ENCODE measurements at regions of chr1 and their contacts with region 1.

Region 1: GRCh38 chr1:159936273-159936904 is 9.0 kb downstream of the IGSF9 start:
- DNase-seq: peak; percentile 66 to 86 (median 77)
- H3K4me3 ChIP-seq: no peak overlapping the region
- H3K4me3 Mint-ChIP-seq: peak overlapping the region in 1 of 7 donors; percentile 54
- H3K27ac ChIP-seq: no peak overlapping the region
- H3K27ac Mint-ChIP-seq: peak overlapping the region in 2 of 8 donors; percentile 4 to 52
- H3K4me1 ChIP-seq: peaks cover 9% of the 10 kb centered on the region
- H3K4me1 Mint-ChIP-seq: peaks cover 5 to 8% (median 5%) of the 10 kb centered on the region in 3 donors
- H3K27me3 ChIP-seq: peaks cover 2% of the 10 kb centered on the region
- H3K27me3 Mint-ChIP-seq: peaks cover 9 to 21% of the 10 kb centered on the region in 2 donors

Region 2: GRCh38 chr1:159924981-159925712 is 11.2 kb before region 1 on chr1 and contains the start of gene TAGLN2:
- CTCF ChIA-PET with region 1: interaction called, 55 read pairs
- POLR2A ChIA-PET with region 1: no interaction called
- DNase-seq: peak; percentile 79 to 93 (median 87)
- H3K4me3 ChIP-seq: peak within 1 kb of the TSS; percentile 100
- H3K4me3 Mint-ChIP-seq: peak within 1 kb of the TSS; percentile 89 to 99 (median 96)
- H3K27ac ChIP-seq: peak within 1 kb of the TSS; percentile 100
- H3K27ac Mint-ChIP-seq: peak within 1 kb of the TSS; percentile 97 to 100 (median 100)
- H3K4me1 ChIP-seq: peaks cover 44% of the 10 kb centered on the region
- H3K4me1 Mint-ChIP-seq: peaks cover 50 to 61% (median 52%) of the 10 kb centered on the region in 3 donors
- H3K27me3 ChIP-seq: no peaks in the 10 kb centered on the region
- H3K27me3 Mint-ChIP-seq: peaks cover 0 to 20% of the 10 kb centered on the region in 2 donors
- total RNA-seq, gene TAGLN2: 566 to 578 TPM

Region 3: GRCh38 chr1:159979257-159979656 is 42.9 kb after region 1 on chr1:
- CTCF ChIA-PET with region 1: no interaction called
- POLR2A ChIA-PET with region 1: no interaction called
- DNase-seq: no peak
- H3K4me3 ChIP-seq: no peak overlapping the region
- H3K4me3 Mint-ChIP-seq: no peak overlapping the region
- H3K27ac ChIP-seq: no peak overlapping the region
- H3K27ac Mint-ChIP-seq: no peak overlapping the region
- H3K4me1 ChIP-seq: no peaks in the 10 kb centered on the region
- H3K4me1 Mint-ChIP-seq: no peaks in the 10 kb centered on the region
- H3K27me3 ChIP-seq: no peaks in the 10 kb centered on the region
- H3K27me3 Mint-ChIP-seq: peaks cover 11 to 45% of the 10 kb centered on the region in 2 donors